ENCODE measurements at regions of chr19 and their contacts with region 1.

Region 1: GRCh38 chr19:2610637-2611482 is 91.6 kb downstream of the GNG7 start:
- DNase-seq: peak; percentile 91 to 97 (median 95)
- H3K4me3 ChIP-seq: peak overlapping the region; percentile 44
- H3K27ac ChIP-seq: peak overlapping the region in 1 of 2 donors; percentile 48
- H3K4me1 ChIP-seq: no peaks in the 10 kb centered on the region
- H3K27me3 ChIP-seq: no peaks in the 10 kb centered on the region
- CTCF ChIP-seq: peak; percentile 90 to 99 (median 97)
- EP300 ChIP-seq: peak; percentile 61
- POLR2A ChIP-seq: peak; percentile 44

Region 2: DNA sequence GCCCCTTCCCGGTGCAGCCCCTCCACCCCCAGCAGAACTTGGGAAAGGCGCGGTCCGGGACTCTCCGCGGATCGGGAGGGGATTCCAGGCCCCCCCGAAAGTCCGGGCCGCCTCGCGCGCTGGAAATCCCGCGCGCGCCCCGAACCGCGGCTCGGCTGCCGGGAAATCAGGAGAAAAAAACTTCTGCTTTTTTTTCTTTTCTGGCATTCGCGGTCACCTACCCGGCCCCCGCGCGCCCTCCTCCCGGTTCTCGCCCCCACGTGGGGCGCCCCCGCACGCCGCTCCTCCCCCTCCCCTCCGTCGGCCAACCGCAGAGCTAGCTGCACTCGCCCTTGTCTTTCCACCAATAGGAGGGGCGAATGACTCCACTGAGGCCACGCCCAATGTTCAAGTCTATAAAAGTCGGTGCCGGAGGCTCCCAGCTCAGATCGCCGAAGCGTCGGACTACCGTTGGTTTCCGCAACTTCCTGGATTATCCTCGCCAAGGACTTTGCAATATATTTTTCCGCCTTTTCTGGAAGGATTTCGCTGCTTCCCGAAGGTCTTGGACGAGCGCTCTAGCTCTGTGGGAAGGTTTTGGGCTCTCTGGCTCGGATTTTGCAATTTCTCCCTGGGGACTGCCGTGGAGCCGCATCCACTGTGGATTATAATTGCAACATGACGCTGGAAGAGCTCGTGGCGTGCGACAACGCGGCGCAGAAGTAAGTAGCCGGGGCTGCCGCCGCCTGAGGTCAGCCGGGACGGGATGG is 135.0 kb before region 1 on chr19 and contains the start of gene GADD45B:
- intact Hi-C with region 1: loop called (anchors 2 to 5 kb)
- DNase-seq: peak; percentile 98 to 99 (median 99)
- H3K4me3 ChIP-seq: peak within 1 kb of the TSS; percentile 86
- H3K27ac ChIP-seq: peak within 1 kb of the TSS; percentile 62 to 73
- H3K4me1 ChIP-seq: peaks cover 7% of the 10 kb centered on the region
- H3K27me3 ChIP-seq: no peaks in the 10 kb centered on the region
- CTCF ChIP-seq: peak in 1 of 3 donors; percentile 39
- EP300 ChIP-seq: peak; percentile 86
- POLR2A ChIP-seq: peak; percentile 100
- total RNA-seq, gene GADD45B: 47.0 to 414 (median 73.9) TPM

Region 3: GRCh38 chr19:2567246-2567979 is 43.4 kb before region 1 on chr19:
- intact Hi-C with region 1: no loop called
- DNase-seq: peak in 4 of 5 donors; percentile 6 to 39 (median 27)
- H3K4me3 ChIP-seq: no peak overlapping the region
- H3K27ac ChIP-seq: no peak overlapping the region
- H3K4me1 ChIP-seq: no peaks in the 10 kb centered on the region
- H3K27me3 ChIP-seq: no peaks in the 10 kb centered on the region
- CTCF ChIP-seq: no peak
- EP300 ChIP-seq: no peak
- POLR2A ChIP-seq: no peak

Region 4: DNA sequence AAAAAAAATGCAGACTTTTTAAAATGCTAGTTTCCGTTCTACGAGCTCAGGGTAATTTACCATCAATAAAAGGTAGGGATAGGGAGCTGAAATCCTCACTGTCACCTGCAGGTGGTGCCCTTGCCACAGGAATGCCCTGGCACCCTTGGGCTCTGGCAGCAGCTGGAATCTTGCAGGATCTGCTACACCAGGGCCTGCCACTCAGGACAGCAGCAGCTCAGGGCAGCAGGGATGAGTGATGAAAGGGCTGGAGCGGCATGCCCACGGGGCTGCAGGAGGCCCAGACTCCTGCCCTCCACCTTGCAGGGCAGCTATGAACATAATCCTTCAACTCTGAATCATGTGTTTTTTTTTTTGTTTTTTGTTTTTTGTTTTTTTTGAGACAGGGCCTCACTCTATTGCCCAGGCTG is 37.7 kb after region 1 on chr19:
- intact Hi-C with region 1: no loop called
- DNase-seq: peak; percentile 67 to 84 (median 73)
- H3K4me3 ChIP-seq: no peak overlapping the region
- H3K27ac ChIP-seq: no peak overlapping the region
- H3K4me1 ChIP-seq: peaks cover 14% of the 10 kb centered on the region
- H3K27me3 ChIP-seq: no peaks in the 10 kb centered on the region
- CTCF ChIP-seq: peak; percentile 24 to 85 (median 76)
- EP300 ChIP-seq: no peak
- POLR2A ChIP-seq: peak; percentile 10

Measured in ovary (tissue), 10 donors.